Right ventricle myocardium inferior (tissue), 1 donor: ENCODE measurements at regions of chr1 and their contacts with region 1.

Region 1: DNA sequence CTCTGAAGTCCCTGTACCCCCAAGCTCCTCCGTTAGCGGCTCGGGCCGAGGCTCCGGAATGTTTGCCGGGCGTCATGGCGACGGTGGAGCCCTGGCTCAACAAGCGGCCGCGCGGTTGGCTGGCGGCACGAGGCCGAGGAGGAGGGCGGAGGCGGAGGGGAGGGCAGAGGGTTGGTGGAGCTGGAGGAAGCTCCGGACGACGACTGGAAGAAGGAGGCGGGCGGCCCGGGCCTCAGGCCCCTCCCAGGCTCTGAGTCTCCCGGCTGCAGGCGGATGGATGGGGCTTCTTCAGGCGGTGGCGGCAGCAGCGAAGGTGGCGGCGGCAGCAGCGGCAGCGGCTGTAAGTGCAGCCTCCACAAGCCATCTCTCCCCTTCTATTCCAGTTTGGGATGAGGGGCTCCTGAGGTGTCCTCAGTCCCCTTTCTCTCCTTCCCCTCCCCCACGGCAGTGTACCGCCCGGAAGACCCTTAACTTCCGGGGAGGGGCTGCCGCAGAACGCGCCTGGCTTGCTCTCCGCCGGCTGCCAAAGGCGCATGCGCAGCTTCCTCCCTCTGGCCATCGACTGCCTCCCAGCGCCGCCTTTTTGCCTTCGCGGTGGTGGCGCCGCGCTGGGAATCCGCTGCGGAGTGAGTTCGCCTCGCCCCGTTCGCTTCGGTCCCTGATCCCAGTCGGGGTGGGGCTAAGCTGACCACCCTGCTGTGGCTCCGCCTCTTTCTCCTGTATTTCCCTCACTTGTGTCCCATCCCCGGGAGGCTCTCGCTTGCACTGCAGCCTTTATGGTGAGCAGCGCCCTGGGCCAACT is at the starts of genes DNAI4 and MIER1:
- DNase-seq: peak; percentile 100
- ATAC-seq: peak; percentile 98
- total RNA-seq, gene DNAI4: 14.3 TPM
- total RNA-seq, gene MIER1: 18.4 TPM

Region 2: GRCh38 chr1:66542811-66543767 is 381.9 kb before region 1 on chr1:
- intact Hi-C with region 1: loop called (anchors 10 kb)
- DNase-seq: peak; percentile 70
- ATAC-seq: peak; percentile 89

Region 3: GRCh38 chr1:66764994-66765578 is 159.9 kb before region 1 on chr1:
- intact Hi-C with region 1: loop called (anchors 5 kb)
- DNase-seq: no peak
- ATAC-seq: no peak

Region 4: DNA sequence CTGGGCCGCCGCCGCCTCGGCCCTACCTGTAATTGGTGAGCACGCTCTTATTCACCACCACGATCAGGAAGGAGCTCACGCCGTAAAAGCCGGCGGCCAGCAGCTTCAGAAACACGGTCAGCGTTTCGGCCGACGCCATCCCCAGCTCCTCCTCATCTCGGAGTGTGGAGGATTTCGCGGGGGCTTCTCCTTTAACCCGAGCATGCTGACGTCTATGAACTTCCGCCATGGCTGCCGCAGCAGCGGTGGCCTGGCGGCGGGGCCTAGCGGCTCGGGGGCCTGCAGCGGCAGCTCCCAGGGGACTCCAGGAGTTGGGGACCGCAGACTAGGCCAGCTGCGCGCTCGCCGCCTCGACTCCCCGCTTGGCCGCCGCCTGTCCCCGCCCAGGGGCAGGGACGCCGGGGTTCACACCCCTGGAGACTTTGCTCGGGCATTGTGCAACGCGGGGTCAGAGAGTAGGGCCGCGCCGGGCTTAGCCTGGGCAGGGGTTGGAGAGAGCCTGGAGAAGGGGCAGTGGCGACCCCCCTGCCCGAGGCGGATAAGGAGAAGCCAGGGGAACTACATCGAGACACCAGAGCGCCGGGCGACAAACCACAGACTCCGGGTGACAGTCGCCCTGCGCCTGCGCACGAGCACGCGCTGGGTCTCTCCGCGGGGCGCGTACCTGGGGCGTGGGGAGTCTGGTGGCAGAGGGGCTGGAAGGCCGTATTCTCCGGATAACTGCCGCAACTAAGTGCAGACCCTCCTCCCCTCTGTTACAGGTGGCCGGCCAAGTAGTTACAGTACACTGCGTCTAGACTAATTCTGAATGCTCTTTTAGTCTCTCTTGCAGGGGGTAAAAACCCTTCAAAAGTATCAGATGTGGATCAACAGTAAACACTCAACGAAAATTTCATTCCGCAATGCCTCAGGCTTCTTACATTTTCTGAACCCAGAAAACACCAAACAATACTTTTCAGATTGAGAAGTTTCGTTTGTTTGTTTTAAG is 129.1 kb after region 1 on chr1 and contains the start of gene SLC35D1:
- intact Hi-C with region 1: loop called (anchors 5 kb)
- DNase-seq: peak; percentile 89
- ATAC-seq: peak; percentile 89
- total RNA-seq, gene SLC35D1: 3.2 TPM

Region 5: GRCh38 chr1:67118191-67118590 is 193.2 kb after region 1 on chr1:
- intact Hi-C with region 1: no loop called
- DNase-seq: no peak
- ATAC-seq: no peak

Region 6: GRCh38 chr1:67430352-67431155 is 505.6 kb after region 1 on chr1 and contains the start of gene SERBP1:
- intact Hi-C with region 1: loop called (anchors 10 kb)
- DNase-seq: peak; percentile 99
- ATAC-seq: peak; percentile 99
- total RNA-seq, gene SERBP1: 123 TPM